Posterior vena cava (tissue), 2 donors: ENCODE measurements at regions of chr9 and their contacts with region 1.

Region 1: GRCh38 chr9:135692410-135692809 is 6.9 kb downstream of the SOHLH1 start:
- DNase-seq: no peak

Region 2: DNA sequence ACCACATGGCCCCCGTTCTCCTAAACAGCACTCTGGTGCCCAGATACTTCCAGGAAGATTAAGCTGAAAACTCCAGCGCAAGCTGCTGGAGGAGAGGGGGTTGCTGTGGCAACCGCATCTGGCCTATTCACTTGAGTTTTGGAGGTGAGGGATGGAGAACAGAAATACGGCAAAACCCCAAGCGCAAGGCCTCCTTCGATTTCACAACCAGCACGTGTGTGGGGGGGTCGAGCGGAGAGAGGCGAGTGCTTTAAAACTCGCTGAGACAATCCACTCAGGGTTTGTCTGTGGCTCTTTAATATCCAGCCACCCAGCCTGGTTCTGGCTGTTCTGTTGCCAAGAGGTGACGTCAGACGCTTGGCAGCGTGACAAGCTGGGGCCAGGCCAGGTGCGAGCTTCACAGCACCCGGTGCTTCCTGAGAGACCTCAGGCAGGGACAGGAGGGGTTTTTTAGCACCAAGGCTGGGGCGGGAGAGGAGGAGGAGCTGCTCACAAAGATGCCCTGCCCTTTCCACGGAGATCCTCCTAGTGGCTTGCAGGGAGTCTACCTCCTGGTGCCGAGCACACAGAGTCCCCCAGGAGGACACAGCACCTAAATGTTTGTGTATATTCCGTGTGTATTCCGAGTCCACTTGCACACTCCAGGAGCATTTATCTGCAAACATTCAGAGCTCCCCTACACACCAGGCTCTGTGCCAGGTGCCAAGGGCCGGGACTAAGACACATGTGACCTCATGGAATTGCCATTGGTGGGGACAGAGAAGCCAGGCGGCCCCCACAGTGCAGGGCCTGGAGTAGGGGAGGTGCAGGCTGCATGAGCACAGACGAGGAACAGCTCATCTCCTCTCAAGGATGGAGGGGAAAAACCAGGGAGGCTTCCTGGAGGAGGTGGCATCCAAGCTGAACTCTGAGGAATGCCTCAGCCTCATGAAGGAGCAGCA is 410.3 kb before region 1 on chr9:
- intact Hi-C with region 1: loop called in 1 of 2 experiments (anchors 10 kb)
- DNase-seq: peak; percentile 76

Region 3: DNA sequence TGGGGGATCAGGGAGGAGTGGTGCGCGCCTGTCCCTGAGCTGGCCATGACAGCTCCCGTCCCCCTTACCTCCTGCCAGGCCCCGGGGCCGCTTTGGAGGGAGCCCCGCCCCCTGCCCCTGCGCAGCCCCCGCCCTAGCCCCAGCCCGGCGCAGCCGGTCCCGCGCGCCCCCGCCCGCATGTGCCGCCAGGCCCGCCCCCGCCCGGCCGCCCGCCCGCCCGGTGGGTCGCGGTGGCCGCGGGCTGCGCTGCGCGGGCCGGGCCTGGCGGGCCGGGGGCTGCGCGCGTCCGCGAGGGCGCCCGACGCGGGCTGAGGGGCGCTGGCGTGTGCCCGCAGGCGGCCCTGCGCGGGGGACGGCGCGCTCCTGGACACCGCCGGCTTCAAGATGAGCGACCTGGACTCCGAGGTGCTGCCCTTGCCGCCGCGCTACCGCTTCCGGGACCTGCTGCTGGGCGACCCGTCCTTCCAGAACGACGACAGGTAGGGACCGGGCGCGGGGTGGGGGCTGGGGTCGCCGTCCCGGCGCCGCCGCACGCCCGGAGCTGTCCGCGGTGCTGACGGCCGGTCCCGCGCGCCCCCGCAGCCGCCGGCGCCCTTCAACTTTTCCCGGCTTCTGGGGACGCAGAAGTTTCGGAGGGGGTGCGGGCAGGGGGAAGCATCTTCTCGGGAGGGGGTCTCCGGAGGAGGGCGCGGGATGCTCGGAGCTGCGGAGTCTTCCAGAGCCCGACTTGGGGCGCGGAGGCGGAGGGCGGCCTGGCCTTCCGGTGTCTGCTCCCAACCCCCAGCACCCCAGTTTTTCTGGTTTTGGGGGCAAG is 22.0 kb after region 1 on chr9:
- intact Hi-C with region 1: loop called in 1 of 2 experiments (anchors 1 kb)
- DNase-seq: no peak

Region 4: GRCh38 chr9:135907431-135908092 is 215.2 kb after region 1 on chr9 and contains the start of gene CAMSAP1:
- intact Hi-C with region 1: no loop called
- DNase-seq: peak; percentile 98
- total RNA-seq, gene CAMSAP1: 20.8 to 24.1 TPM